Breast epithelium (tissue), 4 donors: ENCODE measurements at regions of chr12 and their contacts with region 1.

Region 1: GRCh38 chr12:6124411-6125309 is at the start of gene VWF:
- DNase-seq: peak in 1 of 2 donors; percentile 29
- H3K4me3 ChIP-seq: peak within 1 kb of the TSS; percentile 36 to 55 (median 39)
- H3K27ac ChIP-seq: peak within 1 kb of the TSS; percentile 63 to 72
- H3K4me1 ChIP-seq: no peaks in the 10 kb centered on the region
- H3K27me3 ChIP-seq: no peaks in the 10 kb centered on the region
- CTCF ChIP-seq: no peak
- POLR2A ChIP-seq: no peak
- total RNA-seq, gene VWF: 60.3 to 267 (median 117) TPM

Region 2: GRCh38 chr12:5417500-5417899 is 707.2 kb before region 1 on chr12:
- intact Hi-C with region 1: no loop called
- DNase-seq: no peak
- H3K4me3 ChIP-seq: no peak overlapping the region
- H3K27ac ChIP-seq: no peak overlapping the region
- H3K4me1 ChIP-seq: no peaks in the 10 kb centered on the region
- H3K27me3 ChIP-seq: peaks cover 0 to 7% of the 10 kb centered on the region in 2 donors
- CTCF ChIP-seq: no peak
- POLR2A ChIP-seq: no peak

Region 3: DNA sequence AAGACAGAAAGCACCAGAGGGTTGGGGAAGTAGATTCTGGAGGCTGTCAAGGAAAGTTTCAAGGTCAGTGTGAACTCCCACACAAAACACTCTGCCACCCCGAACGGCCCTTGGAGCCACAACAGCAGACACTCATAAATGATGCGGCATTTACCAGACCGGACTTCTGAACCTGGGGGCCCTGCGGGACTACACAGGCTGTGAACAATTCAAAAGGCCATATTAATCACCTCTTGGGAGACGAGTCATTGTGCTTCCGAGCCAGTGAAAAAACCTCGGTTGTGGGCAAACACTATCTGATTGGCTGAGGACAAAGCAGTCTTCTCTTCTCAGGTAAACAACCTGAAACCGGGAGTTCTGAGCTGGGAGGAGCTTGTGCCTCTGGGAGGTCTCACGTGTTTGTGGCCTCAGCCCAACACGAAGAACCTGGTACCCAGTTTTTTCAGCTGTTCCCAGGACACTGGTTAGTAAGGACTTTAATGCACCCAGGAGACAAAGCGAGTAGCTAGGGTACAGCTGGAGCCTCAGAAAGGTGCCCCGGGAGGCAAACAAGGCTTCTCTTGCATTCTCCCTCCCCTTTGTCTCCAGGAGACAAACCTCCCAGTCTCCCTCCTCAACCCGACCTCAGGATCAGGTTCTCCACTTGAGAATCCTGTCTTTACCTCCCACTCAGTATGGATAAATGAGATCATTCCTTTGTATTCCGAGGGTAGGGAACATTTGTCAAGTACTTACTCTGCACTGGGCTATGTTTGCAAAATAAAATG is 35.5 kb before region 1 on chr12:
- intact Hi-C with region 1: loop called (anchors 1 kb)
- DNase-seq: peak in 1 of 2 donors; percentile 42
- H3K4me3 ChIP-seq: peak overlapping the region in 1 of 3 donors; percentile 33
- H3K27ac ChIP-seq: peak overlapping the region; percentile 34 to 54
- H3K4me1 ChIP-seq: peaks cover 0 to 15% of the 10 kb centered on the region in 2 donors
- H3K27me3 ChIP-seq: no peaks in the 10 kb centered on the region
- CTCF ChIP-seq: no peak
- POLR2A ChIP-seq: no peak

Region 4: GRCh38 chr12:6167327-6168259 is 42.9 kb after region 1 on chr12:
- intact Hi-C with region 1: no loop called
- DNase-seq: no peak
- H3K4me3 ChIP-seq: no peak overlapping the region
- H3K27ac ChIP-seq: peak overlapping the region; percentile 69 to 85
- H3K4me1 ChIP-seq: no peaks in the 10 kb centered on the region
- H3K27me3 ChIP-seq: no peaks in the 10 kb centered on the region
- CTCF ChIP-seq: no peak
- POLR2A ChIP-seq: no peak

Region 5: DNA sequence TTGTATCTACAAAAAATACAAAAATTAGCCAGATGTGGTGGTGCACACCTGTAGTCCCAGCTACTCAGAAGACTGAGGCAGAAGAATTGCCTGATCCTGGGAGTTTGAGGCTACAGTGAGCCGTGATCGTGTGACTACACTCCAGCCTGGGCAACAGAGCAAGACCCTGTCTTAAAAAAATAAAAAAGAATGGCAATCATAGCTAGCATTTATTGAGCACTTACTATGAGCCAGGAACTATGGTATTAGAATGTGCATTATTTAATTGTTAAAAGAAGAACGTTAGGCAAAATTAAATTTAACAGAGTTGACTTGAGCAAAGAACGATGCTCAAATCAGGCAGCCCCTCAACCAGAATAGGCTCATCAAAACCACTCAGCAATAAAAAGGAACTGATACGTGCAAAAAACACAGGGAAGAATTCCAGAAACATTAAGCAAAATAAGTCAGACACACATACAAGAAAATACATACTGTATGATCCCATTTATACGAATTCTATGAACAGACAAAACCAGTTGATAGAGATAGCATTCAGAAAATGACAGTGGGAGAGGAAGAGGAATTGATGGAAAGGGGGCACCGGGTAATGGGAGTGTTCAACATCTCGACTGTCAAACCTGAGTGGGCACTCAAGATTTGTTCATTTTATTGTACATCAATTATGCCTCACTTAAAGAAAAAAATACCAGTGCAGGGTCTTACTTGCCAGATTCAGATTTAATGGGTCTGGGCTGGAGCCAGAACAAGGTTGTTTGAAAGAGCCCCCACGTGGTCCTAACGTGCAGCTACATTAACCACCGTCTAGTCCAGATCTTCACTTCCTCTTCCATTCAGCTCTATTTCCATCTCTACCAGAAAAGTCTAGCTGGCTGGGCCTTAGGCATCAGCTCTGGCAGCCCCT is 242.7 kb after region 1 on chr12:
- intact Hi-C with region 1: no loop called
- DNase-seq: no peak
- H3K4me3 ChIP-seq: no peak overlapping the region
- H3K27ac ChIP-seq: peak overlapping the region; percentile 35 to 97
- H3K4me1 ChIP-seq: peaks cover 0 to 12% of the 10 kb centered on the region in 2 donors
- H3K27me3 ChIP-seq: no peaks in the 10 kb centered on the region
- CTCF ChIP-seq: peak in 1 of 3 donors; percentile 39
- POLR2A ChIP-seq: no peak

Region 6: DNA sequence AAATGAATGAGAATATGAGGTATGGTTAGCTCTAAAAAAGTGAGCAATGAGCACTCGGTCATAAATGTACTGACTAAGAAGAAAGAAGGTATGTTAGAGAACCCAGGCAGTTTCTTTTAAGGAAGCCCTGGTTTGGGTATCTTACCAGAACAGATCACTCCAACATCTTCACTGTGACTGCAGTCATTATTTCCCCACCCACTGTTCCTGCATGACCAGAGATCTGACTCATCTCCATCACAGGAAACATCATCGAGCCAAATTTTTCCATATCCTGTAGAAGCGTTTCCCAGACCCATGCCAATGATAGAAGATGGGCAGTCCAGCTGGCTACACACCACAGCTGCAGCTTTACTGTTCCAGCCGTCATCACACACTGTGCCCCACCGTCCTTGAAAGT is 1271.3 kb after region 1 on chr12:
- intact Hi-C with region 1: no loop called
- DNase-seq: no peak
- H3K4me3 ChIP-seq: no peak overlapping the region
- H3K27ac ChIP-seq: no peak overlapping the region
- H3K4me1 ChIP-seq: no peaks in the 10 kb centered on the region
- H3K27me3 ChIP-seq: no peaks in the 10 kb centered on the region
- CTCF ChIP-seq: no peak
- POLR2A ChIP-seq: no peak